ENCODE measurements at regions of chr17 and their contacts with region 1.

Region 1: DNA sequence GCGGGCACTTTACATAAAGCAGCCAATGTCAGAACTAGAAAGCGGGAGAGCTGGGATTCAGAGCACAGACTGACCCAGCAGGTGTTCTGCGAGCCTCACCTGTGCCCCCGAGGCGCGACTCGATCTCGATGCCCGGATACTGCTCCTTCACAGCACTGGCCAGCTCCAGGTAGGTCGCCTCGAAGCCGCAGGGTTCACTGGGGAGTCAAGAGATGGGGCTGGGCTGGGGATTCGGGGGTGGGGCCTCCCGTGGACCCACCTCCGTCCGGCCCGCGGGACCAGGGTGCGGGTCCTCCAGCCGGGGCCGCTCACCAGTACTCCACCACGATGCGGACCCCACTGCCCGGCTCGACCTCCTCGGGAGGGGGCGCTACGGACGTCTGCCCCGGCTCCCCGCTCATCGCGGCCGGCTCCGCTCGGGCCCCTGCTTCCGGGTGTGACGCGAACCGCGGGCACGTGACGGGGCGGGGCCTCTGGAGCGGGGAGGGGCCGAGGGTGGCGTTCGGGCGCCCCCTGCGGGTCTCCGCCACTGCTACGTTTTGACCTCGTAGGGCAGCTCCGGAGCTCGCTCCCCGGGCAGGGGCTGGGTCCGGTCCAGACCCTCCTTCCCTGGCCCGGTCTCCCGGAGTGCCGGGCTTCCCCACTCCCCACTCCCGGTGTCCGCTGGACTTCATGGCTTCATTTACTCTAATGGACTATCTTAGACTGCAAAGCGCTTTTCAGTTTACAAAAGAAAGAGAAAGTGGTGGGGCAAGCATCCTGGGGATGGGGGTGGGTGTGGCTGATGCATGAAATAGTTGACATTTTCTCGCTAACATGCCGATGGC is at the start of gene MIEN1:
- DNase-seq: peak; percentile 94
- ATAC-seq: peak; percentile 92
- H3K4me3 Mint-ChIP-seq: peak within 1 kb of the TSS; percentile 88
- H3K27ac Mint-ChIP-seq: peak within 1 kb of the TSS; percentile 84
- H3K4me1 Mint-ChIP-seq: peaks cover 19% of the 10 kb centered on the region
- H3K27me3 Mint-ChIP-seq: no peaks in the 10 kb centered on the region
- total RNA-seq, gene MIEN1: 45.9 to 46.8 TPM

Region 2: GRCh38 chr17:39668199-39668966 is 61.9 kb before region 1 on chr17 and contains the start of gene PNMT:
- CTCF ChIA-PET with region 1: interaction called, 26 read pairs
- DNase-seq: peak; percentile 74
- ATAC-seq: peak; percentile 85
- H3K4me3 Mint-ChIP-seq: peak within 1 kb of the TSS; percentile 30
- H3K27ac Mint-ChIP-seq: no peak within 1 kb of the TSS
- H3K4me1 Mint-ChIP-seq: peaks cover 11% of the 10 kb centered on the region
- H3K27me3 Mint-ChIP-seq: peaks cover 30% of the 10 kb centered on the region
- total RNA-seq, gene PNMT: not detected

Region 3: GRCh38 chr17:39687811-39688518 is 42.3 kb before region 1 on chr17 and contains the start of gene PGAP3:
- CTCF ChIA-PET with region 1: interaction called, 16 read pairs
- DNase-seq: peak; percentile 93
- ATAC-seq: peak; percentile 94
- H3K4me3 Mint-ChIP-seq: peak within 1 kb of the TSS; percentile 91
- H3K27ac Mint-ChIP-seq: peak within 1 kb of the TSS; percentile 92
- H3K4me1 Mint-ChIP-seq: peaks cover 18% of the 10 kb centered on the region
- H3K27me3 Mint-ChIP-seq: no peaks in the 10 kb centered on the region
- total RNA-seq, gene PGAP3: 10.5 to 13.8 TPM

Region 4: GRCh38 chr17:39754161-39754951 is 24.0 kb after region 1 on chr17:
- CTCF ChIA-PET with region 1: interaction called, 19 read pairs
- DNase-seq: peak; percentile 98
- ATAC-seq: peak; percentile 87
- H3K4me3 Mint-ChIP-seq: peak overlapping the region; percentile 78
- H3K27ac Mint-ChIP-seq: peak overlapping the region; percentile 91
- H3K4me1 Mint-ChIP-seq: peaks cover 62% of the 10 kb centered on the region
- H3K27me3 Mint-ChIP-seq: no peaks in the 10 kb centered on the region

Region 5: DNA sequence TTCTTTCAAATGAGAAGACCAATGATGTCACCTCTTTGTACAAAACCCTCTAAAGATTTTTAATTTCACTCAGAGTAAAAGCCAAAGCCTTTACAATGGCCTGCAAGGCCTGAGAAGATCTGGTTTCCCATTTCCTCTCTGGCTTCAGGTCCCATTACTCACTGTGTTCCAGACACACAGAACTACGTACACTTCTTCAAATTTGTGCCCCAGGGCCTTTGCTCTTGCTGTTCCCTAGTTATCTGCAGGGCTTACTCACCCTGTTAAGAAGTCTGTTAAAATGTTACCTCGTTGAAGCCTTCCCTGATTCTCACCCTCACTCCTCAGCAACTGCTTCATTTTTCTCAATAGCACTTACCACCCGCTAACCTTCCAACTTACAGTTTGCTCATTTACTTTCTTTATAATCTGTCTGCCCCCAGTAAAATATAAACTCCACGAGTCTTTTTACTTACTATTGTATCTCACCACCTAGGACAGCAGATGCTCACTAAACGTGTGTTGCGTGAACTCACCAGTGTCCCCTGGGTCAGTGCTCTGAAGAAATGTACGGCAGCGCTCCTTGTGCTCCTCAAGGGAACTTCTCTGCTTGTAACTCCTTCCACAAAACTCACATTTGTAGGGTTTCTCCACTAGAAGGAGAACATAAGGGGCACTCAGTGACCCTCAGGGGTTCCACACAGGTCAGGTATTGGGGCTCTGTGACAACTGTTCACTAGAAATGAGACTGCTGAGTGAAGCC is 57.6 kb after region 1 on chr17:
- CTCF ChIA-PET with region 1: no interaction called
- DNase-seq: no peak
- ATAC-seq: no peak
- H3K4me3 Mint-ChIP-seq: no peak overlapping the region
- H3K27ac Mint-ChIP-seq: no peak overlapping the region
- H3K4me1 Mint-ChIP-seq: peaks cover 49% of the 10 kb centered on the region
- H3K27me3 Mint-ChIP-seq: no peaks in the 10 kb centered on the region